Activated CD4-positive, alpha-beta memory T cell treated with anti-CD3 and anti-CD28 coated beads, Interleukin-2, amount 10 ng/mL, durations not matched to agents 7 days and 5 days (primary cell): ENCODE measurements at regions of chr17 and their contacts with region 1.

Region 1: GRCh38 chr17:69414408-69415274 is at the start of gene MAP2K6:
- DNase-seq: peak; percentile 85
- H3K4me3 Mint-ChIP-seq: no peak within 1 kb of the TSS
- H3K27ac Mint-ChIP-seq: no peak within 1 kb of the TSS
- H3K4me1 Mint-ChIP-seq: peaks cover 2% of the 10 kb centered on the region
- H3K27me3 Mint-ChIP-seq: no peaks in the 10 kb centered on the region
- total RNA-seq, gene MAP2K6: 5.3 to 6.9 TPM

Region 2: GRCh38 chr17:69327060-69327831 is 87.4 kb before region 1 on chr17 and contains the start of gene ABCA5:
- CTCF ChIA-PET with region 1: interaction called, 10 read pairs
- POLR2A ChIA-PET with region 1: interaction called, 12 read pairs
- DNase-seq: peak; percentile 93
- H3K4me3 Mint-ChIP-seq: peak within 1 kb of the TSS; percentile 96
- H3K27ac Mint-ChIP-seq: peak within 1 kb of the TSS; percentile 93
- H3K4me1 Mint-ChIP-seq: peaks cover 26% of the 10 kb centered on the region
- H3K27me3 Mint-ChIP-seq: peaks cover 12% of the 10 kb centered on the region
- total RNA-seq, gene ABCA5: 16.5 to 18.2 TPM

Region 3: GRCh38 chr17:69358688-69359596 is 55.7 kb before region 1 on chr17:
- CTCF ChIA-PET with region 1: no interaction called
- POLR2A ChIA-PET with region 1: no interaction called
- DNase-seq: no peak
- H3K4me3 Mint-ChIP-seq: no peak overlapping the region
- H3K27ac Mint-ChIP-seq: no peak overlapping the region
- H3K4me1 Mint-ChIP-seq: no peaks in the 10 kb centered on the region
- H3K27me3 Mint-ChIP-seq: peaks cover 3% of the 10 kb centered on the region

Region 4: DNA sequence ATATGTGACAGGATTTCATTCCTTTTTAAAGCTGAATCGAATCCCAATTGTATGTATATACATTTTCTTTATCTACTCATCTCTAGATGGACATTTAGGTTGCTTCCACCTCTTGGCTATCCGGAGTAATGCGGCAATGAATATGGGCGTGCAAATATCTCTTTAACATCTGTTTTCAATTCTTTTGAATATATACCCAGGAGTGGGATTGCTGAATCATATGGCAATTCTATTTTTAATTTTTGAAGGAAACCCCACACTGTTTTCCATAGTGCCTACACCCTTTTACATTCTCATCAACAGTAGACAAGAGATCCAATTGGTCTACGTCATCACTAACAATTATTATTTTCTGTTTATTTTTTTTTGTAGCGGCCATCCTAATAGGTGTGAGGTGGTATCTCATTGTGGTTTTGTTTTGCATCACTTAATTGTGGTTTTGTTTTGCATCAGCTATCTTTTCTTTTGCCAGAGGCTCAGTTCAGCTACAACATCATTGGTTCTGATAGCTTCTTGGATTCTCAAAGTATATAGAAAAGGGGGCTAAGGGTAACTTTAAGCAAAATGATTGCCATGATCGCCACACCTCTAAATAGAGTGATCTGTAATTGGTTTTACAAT is 25.7 kb before region 1 on chr17:
- CTCF ChIA-PET with region 1: interaction called, 22 read pairs
- POLR2A ChIA-PET with region 1: no interaction called
- DNase-seq: no peak
- H3K4me3 Mint-ChIP-seq: no peak overlapping the region
- H3K27ac Mint-ChIP-seq: no peak overlapping the region
- H3K4me1 Mint-ChIP-seq: no peaks in the 10 kb centered on the region
- H3K27me3 Mint-ChIP-seq: peaks cover 19% of the 10 kb centered on the region

Region 5: DNA sequence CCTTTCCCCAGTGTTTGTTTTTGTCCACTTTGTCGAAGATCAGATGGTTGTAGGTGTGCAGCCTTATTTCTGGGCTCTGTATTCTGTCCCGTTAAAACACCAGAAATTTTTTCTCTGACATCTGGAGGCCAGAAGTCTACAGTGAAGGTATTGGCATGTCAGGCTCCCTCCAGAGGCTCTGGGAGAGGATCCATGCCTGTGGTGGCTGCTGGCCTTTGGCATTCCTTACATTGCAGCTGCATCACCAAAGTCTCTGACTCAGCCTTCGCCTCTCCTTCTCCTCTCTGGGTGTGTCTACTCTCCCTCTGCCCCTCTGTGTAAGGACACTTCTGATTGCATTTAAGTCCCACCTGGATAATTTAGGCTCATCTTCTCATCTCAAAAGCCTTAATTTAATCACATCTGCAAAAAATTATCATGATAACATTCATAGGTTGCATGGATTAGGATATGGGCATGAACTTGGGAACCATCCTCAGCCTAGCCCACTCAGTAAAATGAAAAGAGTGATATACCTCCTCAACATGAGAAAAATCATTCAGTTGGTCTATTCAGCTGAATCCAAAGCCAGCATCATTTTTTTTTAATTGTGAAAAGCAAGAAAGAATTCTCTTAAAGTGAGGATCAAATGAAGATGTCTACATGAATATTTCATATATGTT is 77.9 kb after region 1 on chr17:
- CTCF ChIA-PET with region 1: no interaction called
- POLR2A ChIA-PET with region 1: no interaction called
- DNase-seq: no peak
- H3K4me3 Mint-ChIP-seq: no peak overlapping the region
- H3K27ac Mint-ChIP-seq: no peak overlapping the region
- H3K4me1 Mint-ChIP-seq: no peaks in the 10 kb centered on the region
- H3K27me3 Mint-ChIP-seq: no peaks in the 10 kb centered on the region